ENCODE measurements at regions of chr5 and their contacts with region 1.

Region 1: DNA sequence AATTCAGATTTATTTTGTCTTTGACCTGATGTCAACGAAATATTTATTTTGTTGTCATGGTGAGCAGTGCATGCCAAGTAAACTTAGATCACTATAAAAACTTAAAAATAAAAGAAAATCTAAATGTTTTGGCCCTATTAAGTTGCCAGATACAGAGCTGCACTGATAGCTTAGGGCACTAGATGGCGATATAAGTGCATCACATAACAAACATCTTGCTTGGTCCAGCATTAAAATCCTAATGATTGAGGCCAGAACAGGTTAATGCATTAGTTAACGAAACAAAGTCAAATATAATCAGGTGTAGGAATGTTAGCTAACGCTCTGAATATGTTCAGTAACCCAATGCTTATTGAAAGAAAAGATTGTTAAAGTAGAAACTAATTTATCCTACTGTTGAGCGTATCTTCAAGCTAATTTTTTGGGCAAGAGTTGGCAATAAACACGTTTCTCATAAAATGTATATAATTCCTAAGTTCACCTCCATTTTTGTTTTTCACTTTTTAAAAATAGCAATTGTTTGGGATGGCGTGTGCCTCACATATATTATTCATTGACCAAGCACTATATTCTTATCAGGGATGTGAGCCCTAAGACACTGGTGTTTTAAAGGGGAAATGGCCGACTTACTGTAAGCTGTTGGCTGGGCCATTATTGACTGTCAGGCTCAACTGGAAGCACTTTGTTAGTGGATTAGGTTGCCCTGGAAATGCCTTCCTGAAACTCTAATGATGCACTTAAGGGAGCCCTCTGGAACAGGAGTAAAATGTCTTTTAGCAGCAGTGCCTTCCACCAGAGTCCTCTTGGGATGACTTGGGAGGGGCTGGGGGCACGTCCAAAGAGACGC is 33.3 kb downstream of the KCTD16 start:
- DNase-seq: peak; percentile 73
- ATAC-seq: peak; percentile 76
- H3K4me3 ChIP-seq: no peak overlapping the region
- H3K27ac ChIP-seq: no peak overlapping the region
- H3K4me1 ChIP-seq: peaks cover 4% of the 10 kb centered on the region; the same call in 1 of the 2 replicates
- H3K27me3 ChIP-seq: peaks cover 40% of the 10 kb centered on the region
- CTCF ChIP-seq: peak; percentile 84

Region 2: DNA sequence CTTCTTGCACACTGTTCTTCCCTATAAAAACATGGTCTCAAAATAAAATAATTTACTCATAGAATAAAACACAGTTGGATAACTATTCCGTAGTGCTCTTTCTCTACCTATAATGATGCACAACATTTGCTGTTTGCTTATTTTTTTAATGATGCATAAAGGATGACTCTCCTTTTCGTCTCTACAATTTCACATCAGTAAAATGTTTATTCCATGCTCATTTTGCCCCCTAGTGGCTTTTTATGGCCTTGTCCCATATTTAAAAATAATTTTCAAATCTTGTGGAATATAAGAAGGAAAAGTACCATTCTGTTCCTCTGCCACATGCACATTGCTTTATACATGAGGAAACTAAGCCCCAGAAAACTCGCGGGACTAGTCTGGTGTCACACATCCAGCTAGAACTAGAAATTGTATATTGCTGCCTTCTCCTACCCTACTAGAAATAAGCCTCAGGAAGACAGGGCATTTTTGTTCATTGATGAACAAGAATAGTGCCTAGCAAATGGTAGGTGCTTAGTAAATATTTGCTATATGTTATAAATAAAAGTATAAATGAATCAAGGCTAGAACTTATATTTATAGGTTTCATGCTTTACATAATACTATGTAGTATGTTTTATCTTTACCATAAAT is 20.6 kb before region 1 on chr5:
- CTCF ChIA-PET with region 1: no interaction called
- POLR2A ChIA-PET with region 1: no interaction called
- intact Hi-C with region 1: no loop called
- DNase-seq: peak; percentile 68
- ATAC-seq: peak; percentile 73
- H3K4me3 ChIP-seq: no peak overlapping the region
- H3K27ac ChIP-seq: no peak overlapping the region
- H3K4me1 ChIP-seq: peaks cover 10% of the 10 kb centered on the region
- H3K27me3 ChIP-seq: no peaks in the 10 kb centered on the region
- CTCF ChIP-seq: peak; percentile 72

Region 3: GRCh38 chr5:144697847-144698262 is 493.9 kb after region 1 on chr5:
- CTCF ChIA-PET with region 1: no interaction called
- POLR2A ChIA-PET with region 1: no interaction called
- intact Hi-C with region 1: loop called (anchors 5 kb)
- DNase-seq: peak; percentile 62
- ATAC-seq: peak; percentile 96
- H3K4me3 ChIP-seq: no peak overlapping the region
- H3K27ac ChIP-seq: no peak overlapping the region
- H3K4me1 ChIP-seq: no peaks in the 10 kb centered on the region
- H3K27me3 ChIP-seq: no peaks in the 10 kb centered on the region
- CTCF ChIP-seq: no peak

Region 4: DNA sequence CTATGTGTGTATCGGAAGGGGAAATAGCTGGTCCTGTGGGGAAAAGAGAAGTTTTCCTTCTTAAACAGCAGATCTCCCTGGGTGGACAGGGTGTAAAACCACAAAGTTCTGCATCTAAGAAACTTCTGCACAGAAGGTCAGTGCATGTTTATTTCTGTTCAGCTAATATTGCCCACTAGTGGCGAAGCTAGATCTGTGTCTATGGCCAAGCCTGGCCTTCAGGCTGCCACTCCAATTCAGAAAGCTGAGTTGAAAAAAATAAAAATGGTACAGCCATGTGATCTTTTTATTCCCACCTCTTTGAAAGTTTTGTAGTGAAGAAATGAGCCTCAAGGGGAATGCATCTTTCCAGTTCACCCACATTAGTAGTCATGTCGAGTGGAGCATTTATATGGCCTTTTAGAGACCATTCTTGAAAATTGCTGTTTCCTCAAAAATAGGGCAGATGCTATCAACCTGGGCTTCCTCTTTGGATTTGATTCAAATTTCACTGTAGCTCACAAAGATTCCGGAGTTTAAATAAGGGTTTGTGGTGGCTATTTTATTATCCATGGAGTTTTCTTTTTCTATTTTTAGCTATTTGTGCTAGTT is 1143.1 kb after region 1 on chr5:
- CTCF ChIA-PET with region 1: no interaction called
- POLR2A ChIA-PET with region 1: no interaction called
- intact Hi-C with region 1: loop called (anchors 5 kb)
- DNase-seq: peak; percentile 51
- ATAC-seq: peak; percentile 68
- H3K4me3 ChIP-seq: no peak overlapping the region
- H3K27ac ChIP-seq: no peak overlapping the region
- H3K4me1 ChIP-seq: no peaks in the 10 kb centered on the region; the same call in none of the 2 replicates
- H3K27me3 ChIP-seq: no peaks in the 10 kb centered on the region
- CTCF ChIP-seq: peak; percentile 61

Region 5: DNA sequence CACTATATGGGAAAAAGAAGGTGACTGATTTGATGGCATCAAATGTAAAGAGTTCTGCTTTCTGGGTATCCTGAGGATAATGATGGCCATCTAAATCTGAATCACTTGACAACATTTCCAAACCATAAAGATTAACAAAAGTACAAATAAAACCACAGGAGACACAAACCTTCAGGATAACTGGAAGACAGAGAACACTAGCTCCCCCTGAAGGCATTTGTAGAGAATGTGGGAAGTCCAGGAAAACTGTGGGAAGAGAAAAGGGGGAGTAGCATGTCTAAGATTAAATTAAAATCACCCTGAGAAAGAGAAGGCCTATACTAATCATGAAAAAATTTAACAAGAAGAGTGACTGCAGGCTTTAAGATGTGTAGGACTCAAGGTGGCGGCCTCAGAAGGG is 1515.0 kb after region 1 on chr5:
- CTCF ChIA-PET with region 1: interaction called, 4 read pairs
- POLR2A ChIA-PET with region 1: no interaction called
- intact Hi-C with region 1: loop called (anchors 2 kb)
- DNase-seq: peak; percentile 44
- ATAC-seq: 0 out of 2 replicates have a peak, but pooled peaks have one; percentile 54
- H3K4me3 ChIP-seq: no peak overlapping the region
- H3K27ac ChIP-seq: no peak overlapping the region
- H3K4me1 ChIP-seq: no peaks in the 10 kb centered on the region
- H3K27me3 ChIP-seq: no peaks in the 10 kb centered on the region
- CTCF ChIP-seq: peak; percentile 64

Region 6: GRCh38 chr5:145887976-145888574 is 1684.1 kb after region 1 on chr5:
- CTCF ChIA-PET with region 1: no interaction called
- POLR2A ChIA-PET with region 1: no interaction called
- intact Hi-C with region 1: loop called (anchors 5 kb)
- DNase-seq: peak; percentile 68
- ATAC-seq: peak; percentile 99
- H3K4me3 ChIP-seq: no peak overlapping the region
- H3K27ac ChIP-seq: no peak overlapping the region
- H3K4me1 ChIP-seq: no peaks in the 10 kb centered on the region
- H3K27me3 ChIP-seq: no peaks in the 10 kb centered on the region
- CTCF ChIP-seq: peak; percentile 75

Measured in PC-3 (cell line).